ENCODE measurements at regions of chr14 and their contacts with region 1.

Region 1: DNA sequence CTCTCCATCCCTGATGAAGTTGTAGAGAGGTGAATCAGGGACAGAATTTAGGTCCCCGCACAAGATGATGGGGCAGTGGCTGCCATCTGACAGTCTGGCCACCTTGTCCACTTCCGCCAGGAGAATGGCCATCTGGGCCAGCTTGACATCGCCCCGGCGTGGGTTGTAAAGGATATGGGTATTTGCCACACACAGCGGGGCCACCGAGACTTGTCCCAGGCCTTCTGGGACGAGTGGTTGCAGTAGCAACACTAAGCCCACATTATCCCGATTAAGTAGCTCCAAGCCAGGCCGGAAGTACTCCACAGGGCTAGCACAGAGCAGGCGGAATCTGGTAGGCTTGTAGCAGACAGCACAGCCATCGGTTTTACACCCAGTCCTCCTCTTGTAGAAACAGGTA is 6.2 kb downstream of the ANGEL1 start:
- DNase-seq: no peak
- ATAC-seq: no peak
- H3K4me3 ChIP-seq: no peak overlapping the region
- H3K27ac ChIP-seq: no peak overlapping the region
- H3K4me1 ChIP-seq: peaks cover 37% of the 10 kb centered on the region
- H3K27me3 ChIP-seq: no peaks in the 10 kb centered on the region
- CTCF ChIP-seq: no peak
- POLR2A ChIP-seq: no peak

Region 2: DNA sequence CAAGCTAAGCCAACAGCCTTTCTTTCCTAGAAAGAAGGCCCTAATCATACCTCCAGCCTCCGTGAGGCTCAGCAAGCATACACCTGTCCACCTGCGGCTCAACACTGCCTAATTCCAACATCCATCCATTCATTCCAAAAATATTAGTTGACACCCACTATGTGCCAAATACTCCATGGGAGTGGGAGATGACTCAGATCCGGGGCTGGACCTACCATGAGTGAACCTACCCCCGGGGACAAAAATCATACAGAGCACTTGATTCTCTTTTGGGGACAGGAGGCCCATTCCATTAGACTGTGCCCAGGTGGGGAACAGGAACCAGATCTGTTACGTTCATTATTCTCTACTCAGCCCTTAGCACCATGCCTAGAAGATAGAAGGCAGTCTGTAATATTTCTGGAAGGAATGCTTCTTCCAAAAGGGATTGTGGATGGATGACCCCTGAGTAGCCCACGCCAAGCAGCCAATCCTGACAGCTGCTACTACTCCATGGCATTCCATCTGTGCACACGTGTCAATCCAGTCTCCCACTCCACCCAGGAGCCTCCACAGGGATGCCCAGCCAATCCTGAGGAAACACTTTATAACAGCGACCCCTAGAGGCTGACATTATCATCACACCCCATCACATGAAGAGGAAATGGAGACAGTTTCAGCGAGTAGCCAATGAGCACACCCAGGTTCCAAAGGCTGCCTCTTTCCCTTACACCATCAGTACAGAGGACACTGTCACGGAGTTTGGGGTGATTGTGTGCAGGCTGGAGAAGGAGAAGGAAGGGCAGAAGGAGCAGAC is 259.8 kb before region 1 on chr14:
- intact Hi-C with region 1: no loop called
- DNase-seq: peak in 1 of 4 donors; percentile 3
- ATAC-seq: no peak
- H3K4me3 ChIP-seq: no peak overlapping the region
- H3K27ac ChIP-seq: no peak overlapping the region
- H3K4me1 ChIP-seq: no peaks in the 10 kb centered on the region
- H3K27me3 ChIP-seq: no peaks in the 10 kb centered on the region
- CTCF ChIP-seq: peak in 1 of 7 experiments; percentile 21
- POLR2A ChIP-seq: no peak

Region 3: GRCh38 chr14:76701981-76702380 is 104.5 kb before region 1 on chr14:
- intact Hi-C with region 1: loop called (anchors 10 kb)
- DNase-seq: no peak
- ATAC-seq: no peak
- H3K4me3 ChIP-seq: no peak overlapping the region
- H3K27ac ChIP-seq: no peak overlapping the region
- H3K4me1 ChIP-seq: peaks cover 12% of the 10 kb centered on the region
- H3K27me3 ChIP-seq: no peaks in the 10 kb centered on the region
- CTCF ChIP-seq: no peak
- POLR2A ChIP-seq: no peak

Measured in body of pancreas (tissue), 4 donors.